Adrenal gland (tissue), 19 donors: ENCODE measurements at regions of chr4 and their contacts with region 1.

Region 1: GRCh38 chr4:87093443-87094123 is 126.8 kb downstream of the KLHL8 start:
- DNase-seq: peak in 3 of 7 donors; percentile 26 to 48 (median 33)
- H3K4me3 ChIP-seq: no peak overlapping the region
- H3K27ac ChIP-seq: peak overlapping the region in 3 of 5 donors; percentile 11 to 61 (median 52)
- H3K4me1 ChIP-seq: peaks cover 0 to 26% of the 10 kb centered on the region in 2 donors
- H3K27me3 ChIP-seq: no peaks in the 10 kb centered on the region
- CTCF ChIP-seq: peak; percentile 16 to 68 (median 56)
- POLR2A ChIP-seq: no peak

Region 2: DNA sequence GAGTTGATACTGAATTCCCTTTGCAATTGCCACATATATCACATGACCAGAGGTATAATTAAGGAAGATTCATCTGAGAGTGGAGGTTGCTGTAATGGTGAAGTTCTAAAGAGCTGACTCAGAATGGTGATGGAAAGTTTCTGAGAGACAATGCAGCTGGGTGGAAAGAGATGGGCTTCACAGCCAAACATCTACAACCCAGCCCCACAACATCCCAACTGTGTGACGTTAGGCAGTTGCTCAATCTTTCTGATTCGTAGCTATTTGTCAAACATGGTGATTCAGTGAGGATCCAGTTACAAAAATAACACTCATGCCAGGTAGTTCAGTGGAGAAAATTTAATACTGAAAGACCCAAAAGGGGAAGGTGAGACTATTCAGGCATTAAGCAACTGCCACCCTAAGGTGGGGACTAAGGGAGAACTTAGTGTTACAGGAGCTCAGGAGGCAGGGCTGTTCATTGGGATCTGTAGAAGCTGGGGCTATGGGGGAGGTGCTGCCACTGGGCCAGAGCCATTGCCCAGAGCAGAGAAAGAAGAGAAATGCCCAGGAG is 165.7 kb before region 1 on chr4:
- intact Hi-C with region 1: loop called (anchors 5 to 10 kb)
- DNase-seq: peak; percentile 40 to 88 (median 79)
- H3K4me3 ChIP-seq: no peak overlapping the region
- H3K27ac ChIP-seq: peak overlapping the region in 4 of 5 donors; percentile 25 to 77 (median 54)
- H3K4me1 ChIP-seq: peaks cover 0 to 16% of the 10 kb centered on the region in 2 donors
- H3K27me3 ChIP-seq: no peaks in the 10 kb centered on the region
- CTCF ChIP-seq: no peak
- POLR2A ChIP-seq: no peak

Region 3: GRCh38 chr4:86934771-86935565 is 158.6 kb before region 1 on chr4 and contains the start of gene AFF1:
- intact Hi-C with region 1: loop called in 1 of 2 experiments (anchors 5 kb)
- DNase-seq: peak; percentile 93 to 97 (median 95)
- H3K4me3 ChIP-seq: peak within 1 kb of the TSS; percentile 35 to 98 (median 93)
- H3K27ac ChIP-seq: peak within 1 kb of the TSS; percentile 91 to 100 (median 98)
- H3K4me1 ChIP-seq: peaks cover 28 to 46% of the 10 kb centered on the region in 2 donors
- H3K27me3 ChIP-seq: no peaks in the 10 kb centered on the region
- CTCF ChIP-seq: peak; percentile 29 to 72 (median 49)
- POLR2A ChIP-seq: peak; percentile 89 to 96
- total RNA-seq, gene AFF1: 21.0 to 109 (median 57.5) TPM

Region 4: GRCh38 chr4:87006676-87007527 is 86.7 kb before region 1 on chr4:
- intact Hi-C with region 1: loop called in 1 of 2 experiments (anchors 10 kb)
- DNase-seq: peak; percentile 91 to 97 (median 94)
- H3K4me3 ChIP-seq: peak overlapping the region; percentile 28 to 99 (median 83)
- H3K27ac ChIP-seq: peak overlapping the region; percentile 91 to 98 (median 93)
- H3K4me1 ChIP-seq: peaks cover 24 to 48% of the 10 kb centered on the region in 2 donors
- H3K27me3 ChIP-seq: no peaks in the 10 kb centered on the region
- CTCF ChIP-seq: peak in 4 of 6 experiments; percentile 25 to 64 (median 41)
- POLR2A ChIP-seq: peak; percentile 97 to 98

Region 5: GRCh38 chr4:87932718-87933141 is 839.1 kb after region 1 on chr4:
- intact Hi-C with region 1: no loop called
- DNase-seq: peak in 5 of 7 donors; percentile 19 to 60 (median 26)
- H3K4me3 ChIP-seq: peak overlapping the region in 1 of 4 donors; percentile 8
- H3K27ac ChIP-seq: no peak overlapping the region
- H3K4me1 ChIP-seq: no peaks in the 10 kb centered on the region
- H3K27me3 ChIP-seq: no peaks in the 10 kb centered on the region
- CTCF ChIP-seq: no peak
- POLR2A ChIP-seq: no peak